ENCODE measurements at regions of chr7 and their contacts with region 1.

Region 1: DNA sequence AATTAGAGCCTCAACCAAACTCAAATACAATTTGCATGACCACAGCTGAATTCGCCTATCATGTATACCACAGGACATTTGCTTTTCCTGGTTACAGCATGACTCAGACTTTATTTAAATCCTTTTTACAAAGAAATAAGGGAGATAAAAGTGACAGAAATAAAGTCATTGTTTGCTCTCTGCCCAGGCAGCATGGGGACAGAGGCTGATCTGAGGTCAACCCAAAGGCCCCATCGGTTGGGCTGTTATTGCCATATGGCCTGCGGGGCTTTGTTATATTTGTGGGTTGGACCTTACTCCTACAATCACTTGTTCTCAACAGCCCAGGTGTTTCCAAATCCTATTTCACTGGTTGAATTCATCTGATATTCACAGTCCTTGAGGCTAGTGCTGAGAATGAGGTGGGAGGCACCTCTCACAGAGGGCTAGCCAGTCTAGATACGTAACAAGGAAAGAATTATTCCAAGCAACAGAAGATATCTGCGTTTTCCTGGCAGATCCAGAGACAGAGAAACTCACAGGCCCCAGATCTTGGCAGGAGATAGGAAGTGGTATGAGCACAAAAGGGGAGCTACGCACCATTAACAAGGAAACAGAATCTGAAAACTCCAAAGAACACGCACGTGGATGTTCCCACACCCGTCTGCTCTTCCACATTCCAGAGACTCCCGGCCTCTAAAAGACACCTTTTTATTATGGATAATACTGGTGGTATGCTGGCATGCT is 117.3 kb downstream of the HIPK2 start:
- DNase-seq: no peak
- H3K4me3 ChIP-seq: no peak overlapping the region
- H3K27ac ChIP-seq: no peak overlapping the region
- H3K4me1 ChIP-seq: peaks cover 1 to 19% (median 12%) of the 10 kb centered on the region in 4 experiments; a peak in 5 of 7 replicates
- H3K27me3 ChIP-seq: no peaks in the 10 kb centered on the region
- CTCF ChIP-seq: no peak
- EP300 ChIP-seq: no peak
- POLR2A ChIP-seq: no peak
- RAD21 ChIP-seq: no peak

Region 2: GRCh38 chr7:139673230-139673629 is 12.8 kb after region 1 on chr7:
- CTCF ChIA-PET with region 1: interaction called, 12 read pairs
- POLR2A ChIA-PET with region 1: interaction called, 6 read pairs
- DNase-seq: peak in 1 of 2 experiments; percentile 34
- H3K4me3 ChIP-seq: no peak overlapping the region
- H3K27ac ChIP-seq: no peak overlapping the region
- H3K4me1 ChIP-seq: peaks cover 0 to 7% (median 3%) of the 10 kb centered on the region in 4 experiments; a peak in 2 of 7 replicates
- H3K27me3 ChIP-seq: no peaks in the 10 kb centered on the region
- CTCF ChIP-seq: peak; percentile 7 to 27 (median 20); a peak in 3 of 4 replicates
- EP300 ChIP-seq: no peak; a peak in 1 of 3 replicates
- POLR2A ChIP-seq: no peak
- RAD21 ChIP-seq: peak in 1 of 2 experiments; percentile 36; a peak in 1 of 4 replicates

Region 3: GRCh38 chr7:139875821-139876241 is 215.4 kb after region 1 on chr7:
- CTCF ChIA-PET with region 1: no interaction called
- POLR2A ChIA-PET with region 1: no interaction called
- DNase-seq: no peak
- H3K4me3 ChIP-seq: no peak overlapping the region
- H3K27ac ChIP-seq: no peak overlapping the region
- H3K4me1 ChIP-seq: no peaks in the 10 kb centered on the region
- H3K27me3 ChIP-seq: no peaks in the 10 kb centered on the region
- CTCF ChIP-seq: no peak
- EP300 ChIP-seq: no peak
- POLR2A ChIP-seq: no peak
- RAD21 ChIP-seq: no peak

Measured in H1 (cell line).